Activated CD4-positive, alpha-beta memory T cell treated with anti-CD3 and anti-CD28 coated beads, Interleukin-2, amount 10 ng/mL, durations not matched to agents 7 days and 5 days (primary cell): ENCODE measurements at regions of chr19 and their contacts with region 1.

Region 1: DNA sequence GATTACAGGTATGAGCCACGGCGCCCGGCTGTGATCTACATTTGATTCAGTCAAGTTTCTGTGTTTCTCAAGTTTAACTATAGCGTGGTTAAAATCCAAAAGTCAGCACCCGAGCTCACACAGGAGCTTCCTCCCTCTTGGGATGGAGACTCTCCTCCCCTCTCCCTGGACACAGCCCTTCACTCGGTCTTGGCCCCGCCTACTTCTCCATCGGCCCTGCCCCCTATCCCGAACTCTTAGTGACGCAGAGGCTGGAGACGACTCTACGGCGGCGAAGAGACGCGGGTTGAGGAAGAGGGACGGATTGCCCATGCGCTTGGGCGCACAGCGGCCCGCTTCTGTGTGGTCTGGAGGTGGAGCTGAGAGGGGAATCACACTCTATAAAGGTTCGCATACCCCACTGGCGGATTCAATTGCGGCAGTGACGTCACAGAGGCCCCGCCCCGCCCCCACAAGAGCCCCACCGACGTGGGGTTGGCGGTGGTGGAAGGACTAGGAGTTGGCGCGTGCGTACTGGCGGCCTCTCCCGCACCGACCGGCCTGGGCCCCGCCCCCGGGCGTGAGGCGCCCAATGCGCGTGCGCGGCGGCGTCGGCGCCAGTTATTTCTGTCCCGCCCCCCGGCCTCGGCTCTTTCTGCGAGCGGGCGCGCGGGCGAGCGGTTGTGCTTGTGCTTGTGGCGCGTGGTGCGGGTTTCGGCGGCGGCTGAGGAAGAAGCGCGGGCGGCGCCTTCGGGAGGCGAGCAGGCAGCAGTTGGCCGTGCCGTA is at the start of gene TRIM28:
- DNase-seq: peak; percentile 100
- H3K4me3 Mint-ChIP-seq: peak within 1 kb of the TSS; percentile 96
- H3K27ac Mint-ChIP-seq: peak within 1 kb of the TSS; percentile 98
- H3K4me1 Mint-ChIP-seq: peaks cover 40% of the 10 kb centered on the region
- H3K27me3 Mint-ChIP-seq: peaks cover 11% of the 10 kb centered on the region
- total RNA-seq, gene TRIM28: 345 TPM

Region 2: DNA sequence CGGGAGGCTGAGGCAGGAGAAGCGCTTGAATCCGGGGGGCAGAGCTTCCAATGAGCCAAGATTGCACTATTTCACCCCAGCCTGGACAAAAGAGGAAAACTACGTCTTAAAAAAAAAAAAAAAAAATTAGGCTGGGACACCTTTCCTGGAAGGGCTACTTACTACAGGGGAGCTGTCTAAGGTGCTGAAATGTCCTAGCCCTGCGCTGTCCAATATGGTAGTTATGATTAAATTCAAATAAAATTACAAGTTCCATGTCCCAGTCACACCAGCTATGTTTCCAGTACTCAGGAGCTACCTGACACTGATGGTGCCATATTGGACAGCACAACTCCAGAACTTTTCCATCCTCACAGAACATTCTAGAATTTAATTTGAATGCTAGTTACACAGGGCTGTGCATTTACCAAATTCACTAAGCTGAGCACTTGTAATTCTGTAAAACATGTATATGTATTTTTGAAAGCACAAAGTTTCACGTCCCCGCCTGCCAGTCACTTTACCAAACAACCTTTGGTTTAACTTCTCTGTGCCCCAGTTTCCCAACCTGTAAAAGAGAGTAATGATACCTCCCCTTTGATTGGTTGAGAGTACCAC is 226.4 kb before region 1 on chr19:
- CTCF ChIA-PET with region 1: no interaction called
- POLR2A ChIA-PET with region 1: no interaction called
- DNase-seq: no peak
- H3K4me3 Mint-ChIP-seq: no peak overlapping the region
- H3K27ac Mint-ChIP-seq: no peak overlapping the region
- H3K4me1 Mint-ChIP-seq: no peaks in the 10 kb centered on the region
- H3K27me3 Mint-ChIP-seq: no peaks in the 10 kb centered on the region

Region 3: GRCh38 chr19:58460039-58460438 is 84.0 kb before region 1 on chr19:
- CTCF ChIA-PET with region 1: no interaction called
- POLR2A ChIA-PET with region 1: no interaction called
- DNase-seq: no peak
- H3K4me3 Mint-ChIP-seq: no peak overlapping the region
- H3K27ac Mint-ChIP-seq: no peak overlapping the region
- H3K4me1 Mint-ChIP-seq: no peaks in the 10 kb centered on the region
- H3K27me3 Mint-ChIP-seq: no peaks in the 10 kb centered on the region

Region 4: DNA sequence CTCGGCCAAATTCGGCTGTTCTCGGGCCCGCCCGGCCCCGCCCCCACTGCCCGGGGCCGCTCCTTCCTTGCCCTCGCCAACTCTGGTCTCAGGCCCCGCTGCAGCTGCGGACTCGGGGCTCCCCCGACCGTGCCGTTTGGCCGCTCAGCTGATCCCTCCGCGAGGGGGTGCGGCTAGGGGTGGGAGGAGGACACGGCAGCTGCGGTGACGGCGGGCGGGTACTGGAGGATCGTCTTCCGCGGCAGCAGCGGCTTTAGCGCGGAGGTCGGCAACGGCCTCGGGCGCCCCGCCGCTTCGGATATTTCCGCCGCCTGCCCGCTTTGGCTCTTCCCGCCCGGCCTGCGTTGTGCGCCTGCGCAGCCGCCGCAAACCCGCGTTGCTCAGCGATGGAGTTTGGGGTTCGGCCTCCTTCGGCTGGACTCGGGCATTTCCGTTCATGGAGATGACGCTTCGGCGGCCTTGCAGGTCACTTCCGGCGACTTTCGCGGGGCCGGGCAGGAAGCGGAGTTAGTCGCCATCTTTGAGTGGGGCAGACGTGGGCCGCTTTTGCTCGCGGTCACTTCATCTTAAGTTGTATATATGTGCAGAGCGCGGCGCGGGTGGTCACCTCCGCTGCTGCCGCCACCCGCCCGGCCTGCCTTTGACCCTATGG is 14.7 kb after region 1 on chr19:
- CTCF ChIA-PET with region 1: interaction called, 6 read pairs
- POLR2A ChIA-PET with region 1: interaction called, 89 read pairs
- DNase-seq: peak; percentile 100
- H3K4me3 Mint-ChIP-seq: peak overlapping the region; percentile 98
- H3K27ac Mint-ChIP-seq: peak overlapping the region; percentile 100
- H3K4me1 Mint-ChIP-seq: peaks cover 81% of the 10 kb centered on the region
- H3K27me3 Mint-ChIP-seq: no peaks in the 10 kb centered on the region

Region 5: DNA sequence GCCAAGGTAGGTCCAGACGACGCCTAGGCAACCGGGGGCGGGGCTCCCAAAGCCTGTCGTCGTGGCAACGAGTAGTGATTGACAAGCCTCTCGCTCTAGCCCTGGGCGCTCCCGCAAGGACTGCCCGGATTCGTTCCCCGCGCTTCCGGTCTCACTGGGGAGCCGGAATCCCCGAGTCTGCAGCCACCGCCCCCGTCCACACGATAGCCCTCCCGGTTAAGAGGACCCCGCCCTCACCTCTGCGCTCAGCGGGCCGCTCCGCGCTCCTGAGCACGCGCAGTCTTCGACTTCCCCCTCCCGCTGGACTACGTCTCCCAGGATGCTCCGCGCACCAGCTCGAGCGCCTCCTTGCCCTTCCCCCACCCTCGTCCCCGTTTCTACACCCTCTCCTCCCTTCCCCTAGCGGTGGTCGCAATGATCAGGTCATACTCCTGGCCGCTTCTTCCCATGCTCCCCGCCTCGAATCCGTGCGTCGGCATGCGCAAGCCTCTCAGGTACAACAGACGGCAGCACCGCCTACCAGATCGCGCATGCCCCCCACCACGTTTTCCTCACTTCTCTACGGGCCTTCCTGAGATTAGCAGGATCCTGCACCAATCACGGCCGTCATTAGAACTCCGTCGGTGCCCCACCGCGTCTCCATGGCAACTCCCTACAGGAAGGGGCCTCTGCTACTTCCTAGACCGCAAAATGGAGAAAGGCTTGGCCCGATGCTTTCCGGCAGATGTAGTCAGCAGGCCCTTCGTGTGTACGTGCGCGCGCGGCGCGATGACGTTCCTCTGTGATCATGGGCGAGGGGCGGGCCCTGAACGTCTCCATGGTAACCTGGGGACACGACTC is 29.0 kb after region 1 on chr19 and contains the start of gene MZF1:
- CTCF ChIA-PET with region 1: no interaction called
- POLR2A ChIA-PET with region 1: interaction called, 15 read pairs
- DNase-seq: peak; percentile 100
- H3K4me3 Mint-ChIP-seq: peak within 1 kb of the TSS; percentile 83
- H3K27ac Mint-ChIP-seq: peak within 1 kb of the TSS; percentile 97
- H3K4me1 Mint-ChIP-seq: peaks cover 52% of the 10 kb centered on the region
- H3K27me3 Mint-ChIP-seq: no peaks in the 10 kb centered on the region
- total RNA-seq, gene MZF1: 21.6 to 22.9 TPM